Activated B cell treated with CpG ODN at 0.5 μM for 24 hours (primary cell): ENCODE measurements at regions of chr14 and their contacts with region 1.

Region 1: DNA sequence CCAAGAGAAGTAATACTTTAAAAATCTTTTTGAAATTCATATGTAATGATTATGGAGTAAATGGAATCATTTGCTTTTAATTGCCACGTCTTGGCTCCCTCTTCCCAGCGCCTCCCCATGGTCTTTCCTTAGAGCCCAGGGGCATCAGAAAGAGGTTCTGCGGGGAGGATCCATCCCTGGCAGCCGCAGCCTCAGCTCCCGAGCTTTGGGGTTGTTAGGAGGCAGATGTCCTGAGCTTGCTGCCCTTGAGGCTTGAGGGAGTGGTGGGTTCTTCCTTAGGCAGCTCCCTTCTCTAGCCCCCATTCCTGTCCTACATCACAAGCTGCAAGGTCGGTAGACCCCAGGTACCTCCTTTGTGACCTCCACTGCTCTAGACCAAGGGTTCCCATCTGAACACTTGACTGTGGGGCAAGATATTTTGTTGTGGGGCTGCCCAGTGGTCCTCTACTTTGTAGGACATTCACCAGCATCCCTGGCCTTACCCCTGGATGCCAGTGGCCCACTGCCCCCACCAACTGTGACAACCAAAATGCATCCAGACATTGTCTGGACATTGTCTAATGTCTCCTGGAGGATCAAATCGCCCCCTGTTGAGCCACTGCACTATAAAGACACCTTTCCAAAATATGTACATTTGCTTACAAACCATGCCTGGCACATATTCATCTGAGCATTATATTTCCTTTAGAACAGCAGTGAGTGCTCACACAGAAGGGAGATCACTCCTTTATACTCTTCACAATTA is 6.3 kb downstream of the PPP2R5C start:
- DNase-seq: no peak
- ATAC-seq: no peak
- H3K4me3 Mint-ChIP-seq: no peak overlapping the region
- H3K27ac Mint-ChIP-seq: no peak overlapping the region
- H3K4me1 Mint-ChIP-seq: peaks cover 11% of the 10 kb centered on the region
- H3K27me3 Mint-ChIP-seq: no peaks in the 10 kb centered on the region
- CTCF ChIP-seq: no peak

Region 2: DNA sequence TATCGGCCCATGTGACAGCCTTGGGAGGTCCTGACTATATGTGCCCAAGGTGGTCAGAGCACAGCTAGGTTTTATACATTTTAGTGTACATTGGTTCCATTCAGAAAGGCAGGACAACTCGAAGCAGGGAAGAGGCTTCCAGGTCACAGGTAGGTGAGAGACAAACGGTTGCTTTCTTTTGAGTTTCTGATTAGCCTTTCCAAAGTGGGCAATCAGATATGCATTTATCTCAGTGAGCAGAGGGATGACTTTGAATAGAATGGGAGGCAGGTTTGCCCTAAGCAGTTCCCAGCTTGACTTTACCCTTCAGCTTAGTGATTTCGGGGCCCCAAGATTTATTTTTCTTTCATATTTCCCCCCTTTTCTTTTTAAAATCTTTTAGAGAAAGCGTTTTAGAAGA is 93.9 kb before region 1 on chr14:
- CTCF ChIA-PET with region 1: no interaction called
- POLR2A ChIA-PET with region 1: no interaction called
- intact Hi-C with region 1: no loop called
- DNase-seq: no peak
- ATAC-seq: no peak
- H3K4me3 Mint-ChIP-seq: no peak overlapping the region
- H3K27ac Mint-ChIP-seq: no peak overlapping the region
- H3K4me1 Mint-ChIP-seq: no peaks in the 10 kb centered on the region
- H3K27me3 Mint-ChIP-seq: peaks cover 26% of the 10 kb centered on the region
- CTCF ChIP-seq: no peak

Region 3: GRCh38 chr14:101823511-101824120 is 55.8 kb after region 1 on chr14:
- CTCF ChIA-PET with region 1: interaction called, 19 read pairs
- POLR2A ChIA-PET with region 1: interaction called, 17 read pairs
- intact Hi-C with region 1: no loop called
- DNase-seq: no peak
- ATAC-seq: peak; percentile 31
- H3K4me3 Mint-ChIP-seq: peak overlapping the region; percentile 80
- H3K27ac Mint-ChIP-seq: peak overlapping the region; percentile 99
- H3K4me1 Mint-ChIP-seq: peaks cover 91% of the 10 kb centered on the region
- H3K27me3 Mint-ChIP-seq: no peaks in the 10 kb centered on the region
- CTCF ChIP-seq: no peak

Region 4: GRCh38 chr14:101889898-101890297 is 122.1 kb after region 1 on chr14:
- CTCF ChIA-PET with region 1: interaction called, 13 read pairs
- POLR2A ChIA-PET with region 1: no interaction called
- intact Hi-C with region 1: loop called (anchors 5 kb)
- DNase-seq: no peak
- ATAC-seq: no peak
- H3K4me3 Mint-ChIP-seq: no peak overlapping the region
- H3K27ac Mint-ChIP-seq: peak overlapping the region; percentile 35
- H3K4me1 Mint-ChIP-seq: no peaks in the 10 kb centered on the region
- H3K27me3 Mint-ChIP-seq: no peaks in the 10 kb centered on the region
- CTCF ChIP-seq: no peak

Region 5: DNA sequence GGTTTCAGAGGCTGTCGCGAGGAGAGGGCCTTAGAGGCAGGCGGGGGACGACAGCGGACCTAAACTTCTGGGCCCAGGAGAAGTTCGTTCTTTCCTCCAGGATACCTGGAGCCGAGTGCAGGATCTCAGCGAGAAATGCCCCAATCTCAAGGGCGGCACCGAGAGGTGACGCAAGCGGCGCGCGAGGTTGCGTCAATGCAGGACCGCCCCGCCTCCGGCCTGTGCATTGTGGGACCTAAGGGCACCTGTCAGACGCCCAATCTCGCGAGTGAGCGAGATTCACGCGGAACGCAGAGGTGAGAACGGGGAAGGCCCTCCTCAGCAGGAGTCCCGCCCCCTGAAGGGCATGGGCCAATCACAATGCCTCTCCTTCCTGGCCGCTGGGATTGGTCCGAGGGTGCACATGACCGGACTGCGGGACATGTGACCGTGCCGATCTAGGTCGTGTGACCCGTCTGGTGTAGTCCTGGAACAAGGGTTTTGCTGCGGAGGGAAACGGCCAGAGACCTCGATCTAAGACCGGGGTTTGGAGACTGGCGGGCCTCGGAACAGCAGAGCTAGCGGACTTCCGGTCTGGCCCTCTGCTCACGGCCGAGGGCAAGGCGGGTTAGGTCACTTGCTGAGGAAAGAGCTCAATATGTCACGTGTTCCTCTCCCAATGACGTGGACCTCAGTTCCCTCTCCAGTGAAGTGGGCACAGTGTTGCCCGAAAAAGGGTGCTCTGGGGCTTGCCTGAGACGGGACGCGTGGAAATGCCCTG is 180.3 kb after region 1 on chr14:
- CTCF ChIA-PET with region 1: interaction called, 3 read pairs
- POLR2A ChIA-PET with region 1: interaction called, 10 read pairs
- intact Hi-C with region 1: no loop called
- DNase-seq: peak; percentile 98
- ATAC-seq: peak; percentile 95
- H3K4me3 Mint-ChIP-seq: peak overlapping the region; percentile 93
- H3K27ac Mint-ChIP-seq: peak overlapping the region; percentile 97
- H3K4me1 Mint-ChIP-seq: peaks cover 19% of the 10 kb centered on the region
- H3K27me3 Mint-ChIP-seq: peaks cover 22% of the 10 kb centered on the region
- CTCF ChIP-seq: no peak

Region 6: DNA sequence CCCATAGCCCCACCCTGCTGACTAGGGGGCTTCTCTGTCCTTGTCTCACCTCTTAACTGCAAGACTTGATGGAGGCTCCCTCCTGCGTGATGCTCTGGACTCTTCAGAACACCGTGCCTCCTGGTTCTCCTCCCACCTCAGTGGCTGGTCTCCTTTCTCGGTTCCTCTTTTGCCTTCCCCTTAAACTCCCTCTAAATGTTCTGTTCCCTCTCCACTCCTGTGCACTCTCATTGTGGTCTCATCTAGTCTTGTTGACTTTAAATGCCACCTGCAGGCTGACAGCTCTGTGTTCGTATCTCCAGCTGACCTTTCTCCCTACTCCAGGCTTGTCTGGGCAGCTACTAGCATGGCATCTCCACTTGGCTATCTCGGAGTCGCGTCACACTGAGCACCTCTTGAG is 224.9 kb after region 1 on chr14:
- CTCF ChIA-PET with region 1: interaction called, 17 read pairs
- POLR2A ChIA-PET with region 1: no interaction called
- intact Hi-C with region 1: no loop called
- DNase-seq: peak; percentile 25
- ATAC-seq: peak; percentile 95
- H3K4me3 Mint-ChIP-seq: no peak overlapping the region
- H3K27ac Mint-ChIP-seq: peak overlapping the region; percentile 59
- H3K4me1 Mint-ChIP-seq: peaks cover 23% of the 10 kb centered on the region
- H3K27me3 Mint-ChIP-seq: no peaks in the 10 kb centered on the region
- CTCF ChIP-seq: no peak

Region 7: GRCh38 chr14:102509744-102510615 is 742.2 kb after region 1 on chr14 and contains the start of gene ANKRD9:
- CTCF ChIA-PET with region 1: no interaction called
- POLR2A ChIA-PET with region 1: no interaction called
- intact Hi-C with region 1: no loop called
- DNase-seq: peak; percentile 81
- ATAC-seq: peak; percentile 82
- H3K4me3 Mint-ChIP-seq: peak within 1 kb of the TSS; percentile 82
- H3K27ac Mint-ChIP-seq: no peak within 1 kb of the TSS
- H3K4me1 Mint-ChIP-seq: peaks cover 11% of the 10 kb centered on the region
- H3K27me3 Mint-ChIP-seq: peaks cover 3% of the 10 kb centered on the region
- CTCF ChIP-seq: no peak
- total RNA-seq, gene ANKRD9: 1.4 and 1.8 TPM in 2 replicates

Region 8: GRCh38 chr14:103346286-103346685 is 1578.5 kb after region 1 on chr14:
- CTCF ChIA-PET with region 1: no interaction called
- POLR2A ChIA-PET with region 1: no interaction called
- intact Hi-C with region 1: no loop called
- DNase-seq: no peak
- ATAC-seq: no peak
- H3K4me3 Mint-ChIP-seq: no peak overlapping the region
- H3K27ac Mint-ChIP-seq: no peak overlapping the region
- H3K4me1 Mint-ChIP-seq: peaks cover 2% of the 10 kb centered on the region
- H3K27me3 Mint-ChIP-seq: no peaks in the 10 kb centered on the region
- CTCF ChIP-seq: no peak